Prostate gland (tissue), 2 donors: ENCODE measurements at regions of chr12 and their contacts with region 1.

Region 1: DNA sequence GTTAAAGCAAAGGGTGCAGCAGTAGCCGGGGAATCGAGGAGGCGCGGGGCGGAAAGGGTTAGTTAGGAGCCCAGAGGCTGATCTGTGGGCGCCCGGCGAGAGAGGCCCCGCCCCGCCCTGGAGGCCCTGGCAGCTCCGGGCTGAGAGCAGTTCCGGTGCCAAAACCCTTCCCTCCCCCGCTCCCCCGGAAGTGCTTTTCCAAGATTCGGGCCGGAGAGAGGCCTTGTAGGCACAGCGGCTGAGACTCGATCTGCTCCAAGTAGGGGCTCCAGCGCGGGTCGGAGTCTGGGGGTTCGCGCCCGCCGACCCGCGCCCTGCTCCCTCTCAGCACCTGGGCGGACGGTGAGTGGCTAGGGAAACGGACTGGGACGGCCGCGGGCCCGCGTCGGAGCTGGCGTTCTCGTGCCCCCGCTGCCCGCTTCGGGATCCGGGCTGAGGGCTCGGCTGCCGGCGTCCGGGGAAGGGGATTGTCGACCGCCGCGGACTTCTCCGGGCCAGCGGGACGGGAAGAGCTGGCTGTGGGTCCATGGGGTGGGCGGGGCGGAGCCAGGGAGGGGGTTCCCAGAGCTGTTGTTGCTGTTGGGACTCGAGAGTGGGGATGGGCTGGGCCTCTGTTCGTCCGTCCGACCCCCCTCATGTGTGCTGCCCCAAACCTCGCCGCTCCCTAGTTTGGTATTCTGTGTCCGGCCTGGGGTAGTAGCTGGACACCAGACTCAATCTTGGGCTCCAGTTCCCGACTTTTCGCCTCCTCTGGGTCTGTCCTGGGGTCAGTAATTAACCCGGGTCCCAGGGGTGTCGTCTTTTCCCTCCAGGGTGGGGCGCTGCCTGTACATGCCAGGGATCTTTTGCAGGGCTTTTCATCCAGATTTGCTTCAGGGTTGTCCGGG is at the start of gene FRS2:
- DNase-seq: peak; percentile 88
- H3K4me3 ChIP-seq: peak within 1 kb of the TSS; percentile 83 to 93
- H3K27ac ChIP-seq: peak within 1 kb of the TSS; percentile 90 to 91
- H3K4me1 ChIP-seq: peaks cover 4% of the 10 kb centered on the region
- H3K27me3 ChIP-seq: no peaks in the 10 kb centered on the region
- CTCF ChIP-seq: peak in 1 of 4 experiments; percentile 27
- POLR2A ChIP-seq: peak; percentile 72
- total RNA-seq, gene FRS2: 39.5 to 65.6 TPM

Region 2: DNA sequence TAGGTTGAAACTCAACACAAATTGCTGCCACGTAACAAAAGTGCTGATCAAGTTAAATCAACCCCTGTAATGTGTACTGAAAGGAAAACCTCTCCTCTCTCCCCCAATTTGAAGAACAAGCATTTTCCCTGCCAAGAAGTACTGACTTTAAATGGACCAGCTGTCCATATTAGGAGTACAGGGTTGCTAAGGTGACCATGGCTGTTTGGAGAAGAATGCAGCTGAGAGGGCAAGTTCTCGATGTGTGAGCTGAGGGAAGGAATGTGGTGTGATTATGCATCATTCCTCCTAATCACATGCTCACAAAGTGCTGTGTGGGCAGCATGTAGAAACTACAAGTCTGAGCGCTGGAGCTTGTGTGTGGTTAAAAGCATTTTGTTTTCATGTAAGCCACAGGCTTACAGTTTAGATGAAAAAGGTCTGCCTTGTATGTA is 64.0 kb after region 1 on chr12:
- intact Hi-C with region 1: loop called (anchors 10 kb)
- DNase-seq: no peak
- H3K4me3 ChIP-seq: no peak overlapping the region
- H3K27ac ChIP-seq: peak overlapping the region; percentile 21 to 26
- H3K4me1 ChIP-seq: no peaks in the 10 kb centered on the region
- H3K27me3 ChIP-seq: no peaks in the 10 kb centered on the region
- CTCF ChIP-seq: no peak
- POLR2A ChIP-seq: no peak

Region 3: DNA sequence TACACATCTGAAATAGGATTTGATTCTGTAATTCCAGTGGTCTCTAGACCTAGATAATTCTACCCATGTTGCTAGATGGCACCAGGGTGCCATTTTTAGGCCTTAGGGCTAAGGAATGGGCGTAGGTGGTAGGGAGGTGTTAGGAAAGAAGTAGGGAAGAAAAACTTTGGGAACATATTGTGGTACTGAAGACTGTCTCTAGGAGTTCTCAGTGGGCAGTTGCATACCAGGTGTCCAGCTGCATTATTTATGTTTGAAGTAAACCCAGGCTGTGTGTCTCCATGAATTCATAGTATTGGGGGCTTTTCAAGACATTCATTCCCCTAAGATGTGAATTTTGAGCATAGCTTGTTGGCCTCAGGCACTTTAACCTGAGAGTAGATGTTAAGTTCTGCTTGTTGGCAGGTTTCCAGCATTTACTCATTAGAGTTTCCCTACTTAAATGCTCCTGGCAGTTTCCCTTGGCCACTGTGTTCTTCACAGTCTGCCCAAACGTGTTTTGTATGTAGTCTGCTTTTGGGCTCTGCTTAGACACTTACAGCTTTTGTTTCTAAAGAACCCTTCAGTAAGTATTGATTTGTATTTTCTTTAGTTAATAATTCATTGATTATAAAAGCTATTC is 83.3 kb after region 1 on chr12:
- intact Hi-C with region 1: no loop called
- DNase-seq: peak; percentile 41
- H3K4me3 ChIP-seq: no peak overlapping the region
- H3K27ac ChIP-seq: no peak overlapping the region
- H3K4me1 ChIP-seq: no peaks in the 10 kb centered on the region
- H3K27me3 ChIP-seq: no peaks in the 10 kb centered on the region
- CTCF ChIP-seq: no peak
- POLR2A ChIP-seq: no peak

Region 4: DNA sequence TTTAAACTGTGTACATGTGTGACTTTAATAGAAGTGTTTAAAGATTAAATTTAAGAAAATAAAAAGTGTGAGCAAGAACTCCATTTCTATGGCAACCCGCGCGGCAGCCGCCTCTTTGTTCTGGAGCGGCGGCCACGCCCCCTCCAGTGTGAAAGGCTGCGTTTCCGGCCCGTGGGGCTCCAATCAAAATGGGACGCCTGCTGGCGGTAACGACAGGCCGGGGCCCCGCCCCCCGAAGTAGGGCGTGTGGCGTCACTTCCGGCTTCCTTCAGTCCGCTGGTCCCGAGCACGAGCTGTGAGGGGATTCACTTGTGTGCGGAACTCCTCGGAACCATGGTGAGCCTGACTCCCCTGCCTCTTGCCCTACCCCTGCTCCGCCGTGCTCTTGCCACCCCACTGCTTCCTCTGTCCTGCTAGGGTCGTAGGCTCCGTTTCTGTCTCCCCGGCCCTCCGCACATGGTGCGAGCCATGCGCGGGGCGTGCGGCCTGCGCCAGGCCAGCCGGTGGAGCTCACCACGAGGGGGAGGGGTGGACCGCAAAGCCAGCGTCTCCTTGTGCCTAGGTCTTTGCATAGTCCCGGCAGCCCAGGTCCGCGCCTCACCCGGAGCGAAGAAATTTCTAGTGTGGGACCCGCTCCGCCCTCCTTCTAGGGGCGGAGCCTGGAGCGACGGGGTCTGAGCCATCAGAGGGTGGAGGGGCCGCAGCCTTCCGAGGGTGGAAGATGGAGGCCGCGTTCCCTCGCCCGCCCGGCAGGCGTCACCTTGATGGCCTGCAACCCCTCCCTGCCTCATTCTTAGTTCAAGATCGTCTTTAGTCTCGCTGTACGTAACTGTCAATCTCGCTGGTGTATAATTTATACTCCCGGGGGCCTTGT is 115.0 kb after region 1 on chr12 and contains the start of gene CCT2:
- intact Hi-C with region 1: loop called (anchors 5 kb)
- DNase-seq: peak; percentile 97
- H3K4me3 ChIP-seq: peak within 1 kb of the TSS; percentile 89 to 97
- H3K27ac ChIP-seq: peak within 1 kb of the TSS; percentile 81 to 83
- H3K4me1 ChIP-seq: no peaks in the 10 kb centered on the region
- H3K27me3 ChIP-seq: no peaks in the 10 kb centered on the region
- CTCF ChIP-seq: peak in 3 of 4 experiments; percentile 14 to 48 (median 22)
- POLR2A ChIP-seq: peak; percentile 71
- total RNA-seq, gene CCT2: 86.7 to 116 TPM